Activated CD8-positive, alpha-beta T cell treated with anti-CD3 and anti-CD28 coated beads, Interleukin-2, amount 10 ng/mL, durations not matched to agents 7 days and 5 days (primary cell): ENCODE measurements at regions of chr20 and their contacts with region 1.

Region 1: DNA sequence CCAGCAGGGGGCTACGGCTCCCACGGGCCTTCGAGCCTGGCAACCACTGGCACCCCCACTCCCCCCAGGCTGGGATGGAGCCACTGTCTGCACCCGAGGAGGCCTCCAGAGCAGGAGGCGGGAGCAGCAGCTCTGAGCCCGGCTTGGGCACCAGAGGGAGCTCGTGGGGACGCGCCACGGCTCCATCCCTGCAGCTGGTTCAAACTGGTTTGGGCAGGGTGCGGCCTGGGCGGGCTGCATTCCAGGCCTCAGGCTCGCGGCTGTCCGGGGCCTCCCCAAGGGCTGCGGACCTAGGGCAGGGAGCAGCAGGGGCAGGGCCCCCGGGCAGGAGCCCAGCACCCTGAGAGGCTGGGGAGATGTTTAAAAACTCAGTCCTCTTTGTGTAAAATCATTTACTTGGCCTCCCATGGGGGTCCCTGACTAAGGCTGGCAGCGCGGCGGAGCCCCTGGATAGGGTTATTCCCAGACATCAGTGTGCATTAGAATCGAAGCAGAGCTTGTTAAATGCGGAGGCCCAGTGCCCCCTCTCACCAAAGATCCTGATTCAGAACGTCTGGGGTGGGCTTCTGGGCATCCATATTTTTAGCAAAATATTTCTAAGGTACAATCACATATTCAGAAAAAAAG is 4.1 kb upstream of the BCAS4 start:
- DNase-seq: peak; percentile 88
- ATAC-seq: peak; percentile 70
- H3K4me3 Mint-ChIP-seq: no peak overlapping the region
- H3K27ac Mint-ChIP-seq: peak overlapping the region; percentile 77
- H3K4me1 Mint-ChIP-seq: peaks cover 26% of the 10 kb centered on the region
- H3K27me3 Mint-ChIP-seq: no peaks in the 10 kb centered on the region

Region 2: GRCh38 chr20:50611128-50611810 is 179.5 kb before region 1 on chr20:
- CTCF ChIA-PET with region 1: no interaction called
- POLR2A ChIA-PET with region 1: no interaction called
- DNase-seq: no peak
- ATAC-seq: no peak
- H3K4me3 Mint-ChIP-seq: no peak overlapping the region
- H3K27ac Mint-ChIP-seq: no peak overlapping the region
- H3K4me1 Mint-ChIP-seq: no peaks in the 10 kb centered on the region
- H3K27me3 Mint-ChIP-seq: no peaks in the 10 kb centered on the region

Region 3: GRCh38 chr20:50750145-50750671 is 40.6 kb before region 1 on chr20:
- CTCF ChIA-PET with region 1: interaction called, 12 read pairs
- POLR2A ChIA-PET with region 1: interaction called, 3 read pairs
- DNase-seq: no peak
- ATAC-seq: no peak
- H3K4me3 Mint-ChIP-seq: no peak overlapping the region
- H3K27ac Mint-ChIP-seq: no peak overlapping the region
- H3K4me1 Mint-ChIP-seq: peaks cover 17% of the 10 kb centered on the region
- H3K27me3 Mint-ChIP-seq: no peaks in the 10 kb centered on the region

Region 4: GRCh38 chr20:50824193-50824632 is 33.4 kb after region 1 on chr20:
- CTCF ChIA-PET with region 1: interaction called, 63 read pairs
- POLR2A ChIA-PET with region 1: interaction called, 8 read pairs
- DNase-seq: no peak
- ATAC-seq: no peak
- H3K4me3 Mint-ChIP-seq: no peak overlapping the region
- H3K27ac Mint-ChIP-seq: no peak overlapping the region
- H3K4me1 Mint-ChIP-seq: peaks cover 32% of the 10 kb centered on the region
- H3K27me3 Mint-ChIP-seq: no peaks in the 10 kb centered on the region

Region 5: DNA sequence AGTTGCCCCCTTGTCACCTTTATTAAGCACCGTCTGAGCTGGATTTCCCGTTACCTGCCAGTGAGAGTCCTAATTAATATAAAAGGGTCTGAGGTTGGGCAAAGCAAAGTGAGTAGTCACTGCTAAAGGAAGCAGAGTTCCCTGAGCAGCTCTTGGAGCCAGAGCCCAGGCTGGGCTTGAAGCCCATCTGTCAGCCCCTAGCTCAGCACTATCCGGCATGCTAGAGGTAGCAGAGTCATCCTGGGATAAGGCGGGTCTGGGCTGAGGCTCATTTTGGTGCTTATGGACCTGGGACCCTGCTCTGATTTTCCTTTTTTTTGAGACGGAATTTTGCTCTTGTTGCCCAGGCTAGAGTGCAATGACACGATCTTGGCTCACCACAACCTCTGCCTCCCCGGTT is 94.3 kb after region 1 on chr20:
- CTCF ChIA-PET with region 1: interaction called, 12 read pairs
- POLR2A ChIA-PET with region 1: interaction called, 3 read pairs
- DNase-seq: no peak
- ATAC-seq: peak; percentile 32
- H3K4me3 Mint-ChIP-seq: no peak overlapping the region
- H3K27ac Mint-ChIP-seq: peak overlapping the region; percentile 25
- H3K4me1 Mint-ChIP-seq: peaks cover 2% of the 10 kb centered on the region
- H3K27me3 Mint-ChIP-seq: no peaks in the 10 kb centered on the region

Region 6: GRCh38 chr20:50913690-50914375 is 123.1 kb after region 1 on chr20:
- CTCF ChIA-PET with region 1: interaction called, 40 read pairs
- POLR2A ChIA-PET with region 1: interaction called, 3 read pairs
- DNase-seq: no peak
- ATAC-seq: peak; percentile 67
- H3K4me3 Mint-ChIP-seq: no peak overlapping the region
- H3K27ac Mint-ChIP-seq: peak overlapping the region; percentile 70
- H3K4me1 Mint-ChIP-seq: peaks cover 62% of the 10 kb centered on the region
- H3K27me3 Mint-ChIP-seq: no peaks in the 10 kb centered on the region

Region 7: GRCh38 chr20:50943069-50943468 is 152.3 kb after region 1 on chr20:
- CTCF ChIA-PET with region 1: interaction called, 13 read pairs
- POLR2A ChIA-PET with region 1: no interaction called
- DNase-seq: no peak
- ATAC-seq: peak; percentile 62
- H3K4me3 Mint-ChIP-seq: no peak overlapping the region
- H3K27ac Mint-ChIP-seq: no peak overlapping the region
- H3K4me1 Mint-ChIP-seq: no peaks in the 10 kb centered on the region
- H3K27me3 Mint-ChIP-seq: no peaks in the 10 kb centered on the region

Region 8: GRCh38 chr20:50987592-50988210 is 196.9 kb after region 1 on chr20:
- CTCF ChIA-PET with region 1: interaction called, 29 read pairs
- POLR2A ChIA-PET with region 1: no interaction called
- DNase-seq: peak; percentile 77
- ATAC-seq: peak; percentile 85
- H3K4me3 Mint-ChIP-seq: no peak overlapping the region
- H3K27ac Mint-ChIP-seq: no peak overlapping the region
- H3K4me1 Mint-ChIP-seq: no peaks in the 10 kb centered on the region
- H3K27me3 Mint-ChIP-seq: peaks cover 13% of the 10 kb centered on the region